CD4-positive, alpha-beta T cell (primary cell): ENCODE measurements at regions of chr18 and their contacts with region 1.

Region 1: GRCh38 chr18:12947355-12948041 is at the start of gene SEH1L:
- DNase-seq: peak; percentile 96 to 100 (median 99)
- ATAC-seq: peak; percentile 80
- H3K4me3 ChIP-seq: peak within 1 kb of the TSS; percentile 69
- H3K4me3 Mint-ChIP-seq: peak within 1 kb of the TSS; percentile 92
- H3K27ac ChIP-seq: peak within 1 kb of the TSS; percentile 93 to 96
- H3K27ac Mint-ChIP-seq: peak within 1 kb of the TSS; percentile 96
- H3K4me1 ChIP-seq: peaks cover 38% of the 10 kb centered on the region
- H3K4me1 Mint-ChIP-seq: peaks cover 38% of the 10 kb centered on the region
- H3K27me3 ChIP-seq: no peaks in the 10 kb centered on the region
- H3K27me3 Mint-ChIP-seq: no peaks in the 10 kb centered on the region
- CTCF ChIP-seq: no peak
- total RNA-seq, gene SEH1L: 23.9 to 26.7 TPM

Region 2: GRCh38 chr18:11947214-11948191 is 1000.0 kb before region 1 on chr18:
- CTCF ChIA-PET with region 1: no interaction called
- POLR2A ChIA-PET with region 1: no interaction called
- intact Hi-C with region 1: no loop called
- DNase-seq: peak; percentile 14 to 78 (median 36)
- ATAC-seq: peak; percentile 87
- H3K4me3 ChIP-seq: peak overlapping the region; percentile 67
- H3K4me3 Mint-ChIP-seq: peak overlapping the region; percentile 85
- H3K27ac ChIP-seq: peak overlapping the region in 1 of 2 donors; percentile 44
- H3K27ac Mint-ChIP-seq: peak overlapping the region; percentile 60
- H3K4me1 ChIP-seq: peaks cover 14% of the 10 kb centered on the region
- H3K4me1 Mint-ChIP-seq: peaks cover 16% of the 10 kb centered on the region
- H3K27me3 ChIP-seq: no peaks in the 10 kb centered on the region
- H3K27me3 Mint-ChIP-seq: no peaks in the 10 kb centered on the region
- CTCF ChIP-seq: no peak

Region 3: GRCh38 chr18:12409469-12409868 is 538.0 kb before region 1 on chr18:
- CTCF ChIA-PET with region 1: no interaction called
- POLR2A ChIA-PET with region 1: no interaction called
- intact Hi-C with region 1: no loop called
- DNase-seq: no peak
- ATAC-seq: no peak
- H3K4me3 ChIP-seq: no peak overlapping the region
- H3K4me3 Mint-ChIP-seq: peak overlapping the region; percentile 4
- H3K27ac ChIP-seq: no peak overlapping the region
- H3K27ac Mint-ChIP-seq: no peak overlapping the region
- H3K4me1 ChIP-seq: peaks cover 22% of the 10 kb centered on the region
- H3K4me1 Mint-ChIP-seq: peaks cover 25% of the 10 kb centered on the region
- H3K27me3 ChIP-seq: peaks cover 4 to 9% of the 10 kb centered on the region in 2 experiments
- H3K27me3 Mint-ChIP-seq: peaks cover 29% of the 10 kb centered on the region
- CTCF ChIP-seq: no peak

Region 4: DNA sequence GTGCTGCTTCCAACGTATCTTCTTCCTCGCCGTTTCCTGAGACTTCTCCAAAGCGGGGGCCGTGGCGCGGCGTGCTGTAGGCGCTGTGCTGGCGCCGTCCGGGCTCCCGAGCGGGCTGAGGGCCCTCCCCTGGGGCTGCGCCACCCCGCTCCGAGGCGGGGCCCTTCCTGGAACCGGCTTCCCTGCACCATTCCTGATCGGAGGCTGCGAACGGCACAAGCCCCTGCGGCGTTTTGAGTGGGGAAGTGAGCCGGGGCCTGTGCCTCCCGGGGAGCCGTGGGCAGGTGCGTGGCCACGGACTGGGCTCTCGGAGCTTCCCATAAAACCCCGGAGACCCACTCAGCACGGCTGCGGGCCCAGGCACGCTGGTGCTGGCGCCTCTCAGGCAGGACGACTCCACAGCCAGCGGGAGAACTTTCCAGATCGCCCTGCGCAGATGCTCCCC is 170.0 kb before region 1 on chr18:
- CTCF ChIA-PET with region 1: no interaction called
- POLR2A ChIA-PET with region 1: interaction called, 13 read pairs
- intact Hi-C with region 1: no loop called
- DNase-seq: no peak
- ATAC-seq: no peak
- H3K4me3 ChIP-seq: peak overlapping the region; percentile 43
- H3K4me3 Mint-ChIP-seq: no peak overlapping the region
- H3K27ac ChIP-seq: no peak overlapping the region
- H3K27ac Mint-ChIP-seq: no peak overlapping the region
- H3K4me1 ChIP-seq: peaks cover 4% of the 10 kb centered on the region
- H3K4me1 Mint-ChIP-seq: peaks cover 26% of the 10 kb centered on the region
- H3K27me3 ChIP-seq: no peaks in the 10 kb centered on the region
- H3K27me3 Mint-ChIP-seq: no peaks in the 10 kb centered on the region
- CTCF ChIP-seq: no peak

Region 5: GRCh38 chr18:12990967-12991838 is 43.7 kb after region 1 on chr18 and contains the start of gene CEP192:
- CTCF ChIA-PET with region 1: interaction called, 5 read pairs
- POLR2A ChIA-PET with region 1: interaction called, 47 read pairs
- intact Hi-C with region 1: loop called (anchors 1 to 2 kb)
- DNase-seq: peak; percentile 94 to 99 (median 95)
- ATAC-seq: peak; percentile 97
- H3K4me3 ChIP-seq: peak within 1 kb of the TSS; percentile 85
- H3K4me3 Mint-ChIP-seq: no peak within 1 kb of the TSS
- H3K27ac ChIP-seq: peak within 1 kb of the TSS; percentile 61 to 84
- H3K27ac Mint-ChIP-seq: peak within 1 kb of the TSS; percentile 83
- H3K4me1 ChIP-seq: peaks cover 32% of the 10 kb centered on the region
- H3K4me1 Mint-ChIP-seq: peaks cover 21% of the 10 kb centered on the region
- H3K27me3 ChIP-seq: no peaks in the 10 kb centered on the region
- H3K27me3 Mint-ChIP-seq: no peaks in the 10 kb centered on the region
- CTCF ChIP-seq: no peak
- total RNA-seq, gene CEP192: 23.4 to 25.0 TPM

Region 6: GRCh38 chr18:13103366-13103765 is 155.9 kb after region 1 on chr18:
- CTCF ChIA-PET with region 1: no interaction called
- POLR2A ChIA-PET with region 1: no interaction called
- intact Hi-C with region 1: no loop called
- DNase-seq: peak in 1 of 14 experiments; percentile 6
- ATAC-seq: no peak
- H3K4me3 ChIP-seq: no peak overlapping the region
- H3K4me3 Mint-ChIP-seq: no peak overlapping the region
- H3K27ac ChIP-seq: no peak overlapping the region
- H3K27ac Mint-ChIP-seq: no peak overlapping the region
- H3K4me1 ChIP-seq: no peaks in the 10 kb centered on the region
- H3K4me1 Mint-ChIP-seq: no peaks in the 10 kb centered on the region
- H3K27me3 ChIP-seq: no peaks in the 10 kb centered on the region
- H3K27me3 Mint-ChIP-seq: no peaks in the 10 kb centered on the region
- CTCF ChIP-seq: peak; percentile 12

Region 7: GRCh38 chr18:13137670-13138419 is 190.3 kb after region 1 on chr18:
- CTCF ChIA-PET with region 1: no interaction called
- POLR2A ChIA-PET with region 1: interaction called, 8 read pairs
- intact Hi-C with region 1: loop called in 1 of 2 experiments (anchors 5 kb)
- DNase-seq: peak; percentile 37 to 93 (median 58)
- ATAC-seq: peak; percentile 76
- H3K4me3 ChIP-seq: peak overlapping the region; percentile 72
- H3K4me3 Mint-ChIP-seq: peak overlapping the region; percentile 98
- H3K27ac ChIP-seq: peak overlapping the region; percentile 48 to 50
- H3K27ac Mint-ChIP-seq: peak overlapping the region; percentile 92
- H3K4me1 ChIP-seq: peaks cover 27% of the 10 kb centered on the region
- H3K4me1 Mint-ChIP-seq: peaks cover 32% of the 10 kb centered on the region
- H3K27me3 ChIP-seq: no peaks in the 10 kb centered on the region
- H3K27me3 Mint-ChIP-seq: no peaks in the 10 kb centered on the region
- CTCF ChIP-seq: no peak